ENCODE measurements at regions of chr11 and their contacts with region 1.

Region 1: GRCh38 chr11:43358801-43359421 is at the start of gene TTC17:
- DNase-seq: peak; percentile 96
- ATAC-seq: peak; percentile 96
- H3K4me3 Mint-ChIP-seq: peak within 1 kb of the TSS; percentile 84
- H3K27ac Mint-ChIP-seq: peak within 1 kb of the TSS; percentile 98
- H3K4me1 Mint-ChIP-seq: peaks cover 43% of the 10 kb centered on the region
- H3K27me3 Mint-ChIP-seq: no peaks in the 10 kb centered on the region
- total RNA-seq, gene TTC17: 56.9 to 60.5 TPM

Region 2: DNA sequence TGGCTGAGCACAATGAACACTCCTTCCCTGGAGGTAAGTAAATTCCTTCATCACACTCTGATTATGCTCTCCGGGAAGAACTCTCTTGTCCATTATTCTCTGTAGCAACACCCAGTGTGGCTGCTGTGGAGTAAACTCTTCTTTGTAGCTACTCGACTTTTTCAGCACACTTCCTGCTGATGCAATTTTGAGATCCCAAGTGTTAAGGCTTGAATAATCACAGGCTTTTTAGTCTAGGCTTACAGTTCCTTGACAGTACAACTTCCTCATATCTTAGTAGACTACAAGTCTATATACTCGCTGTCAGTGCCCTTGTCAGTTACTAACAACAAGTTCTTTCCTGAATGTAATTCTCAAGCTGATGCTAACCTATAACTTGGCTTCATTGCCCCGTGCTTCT is 348.9 kb before region 1 on chr11:
- CTCF ChIA-PET with region 1: no interaction called
- POLR2A ChIA-PET with region 1: no interaction called
- DNase-seq: no peak
- ATAC-seq: no peak
- H3K4me3 Mint-ChIP-seq: no peak overlapping the region
- H3K27ac Mint-ChIP-seq: no peak overlapping the region
- H3K4me1 Mint-ChIP-seq: no peaks in the 10 kb centered on the region
- H3K27me3 Mint-ChIP-seq: no peaks in the 10 kb centered on the region

Region 3: DNA sequence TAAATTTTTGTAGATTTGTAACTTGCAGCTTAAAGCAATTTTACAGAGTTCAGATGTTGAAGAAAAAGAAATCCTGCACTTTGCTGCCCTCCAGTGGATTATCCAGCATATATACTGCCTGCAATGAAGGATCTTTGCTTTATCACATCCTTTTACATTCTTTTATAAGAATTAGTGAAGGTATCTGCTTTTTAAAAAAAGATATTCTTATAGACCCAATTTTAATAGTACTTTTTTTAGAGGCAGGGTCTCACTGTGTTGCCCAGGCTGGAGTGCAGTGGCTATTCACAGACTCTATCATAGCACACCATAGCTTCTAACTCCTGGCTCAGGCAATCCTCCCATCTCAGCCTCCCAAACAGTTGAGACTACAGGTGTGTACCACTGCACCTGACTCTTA is 60.5 kb after region 1 on chr11:
- CTCF ChIA-PET with region 1: interaction called, 10 read pairs
- POLR2A ChIA-PET with region 1: interaction called, 10 read pairs
- DNase-seq: peak; percentile 70
- ATAC-seq: peak; percentile 65
- H3K4me3 Mint-ChIP-seq: no peak overlapping the region
- H3K27ac Mint-ChIP-seq: no peak overlapping the region
- H3K4me1 Mint-ChIP-seq: peaks cover 3% of the 10 kb centered on the region
- H3K27me3 Mint-ChIP-seq: no peaks in the 10 kb centered on the region

Measured in activated CD8-positive, alpha-beta T cell treated with anti-CD3 and anti-CD28 coated beads, Interleukin-2, amount 10 ng/mL, durations not matched to agents 7 days and 5 days (primary cell).